Mammary epithelial cell (primary cell): ENCODE measurements at regions of chr19 and their contacts with region 1.

Region 1: GRCh38 chr19:43265664-43266025 is 3.7 kb downstream of the PSG9 start:
- DNase-seq: no peak
- H3K4me3 ChIP-seq: no peak overlapping the region
- H3K27ac ChIP-seq: peak overlapping the region; percentile 96
- H3K4me1 ChIP-seq: peaks cover 31% of the 10 kb centered on the region
- H3K27me3 ChIP-seq: no peaks in the 10 kb centered on the region
- CTCF ChIP-seq: no peak

Region 2: DNA sequence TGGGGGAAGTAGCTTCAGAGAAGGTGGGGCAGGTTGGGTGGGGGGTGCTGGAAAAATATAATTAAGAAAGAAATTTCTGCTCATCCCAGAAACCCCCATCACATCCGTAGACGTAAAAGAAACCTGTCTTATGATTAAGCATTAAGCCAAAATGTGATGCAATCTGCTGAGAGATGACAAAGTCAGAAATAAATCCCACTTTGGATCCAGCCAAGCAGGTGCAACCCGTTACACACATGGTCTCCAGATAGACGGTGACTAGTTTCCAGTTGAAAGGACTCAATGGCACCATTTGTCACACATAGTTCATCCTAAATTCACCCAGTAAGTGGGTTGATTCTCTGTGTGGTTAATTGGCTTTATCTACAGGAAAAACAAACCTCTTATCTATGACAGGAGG is 113.4 kb before region 1 on chr19:
- CTCF ChIA-PET with region 1: no interaction called
- dilution Hi-C with region 1: no loop called
- in situ Hi-C with region 1: no loop called
- intact Hi-C with region 1: no loop called
- DNase-seq: no peak
- H3K4me3 ChIP-seq: no peak overlapping the region
- H3K27ac ChIP-seq: no peak overlapping the region
- H3K4me1 ChIP-seq: peaks cover 26% of the 10 kb centered on the region
- H3K27me3 ChIP-seq: no peaks in the 10 kb centered on the region
- CTCF ChIP-seq: no peak

Region 3: GRCh38 chr19:43207991-43208390 is 57.7 kb before region 1 on chr19:
- CTCF ChIA-PET with region 1: no interaction called
- dilution Hi-C with region 1: no loop called
- in situ Hi-C with region 1: no loop called
- intact Hi-C with region 1: loop called (anchors 5 kb)
- DNase-seq: no peak
- H3K4me3 ChIP-seq: no peak overlapping the region
- H3K27ac ChIP-seq: no peak overlapping the region
- H3K4me1 ChIP-seq: peaks cover 14% of the 10 kb centered on the region
- H3K27me3 ChIP-seq: no peaks in the 10 kb centered on the region
- CTCF ChIP-seq: no peak

Region 4: GRCh38 chr19:43229315-43229714 is 36.3 kb before region 1 on chr19:
- CTCF ChIA-PET with region 1: no interaction called
- dilution Hi-C with region 1: no loop called
- in situ Hi-C with region 1: no loop called
- intact Hi-C with region 1: loop called (anchors 5 kb)
- DNase-seq: peak; percentile 46
- H3K4me3 ChIP-seq: no peak overlapping the region
- H3K27ac ChIP-seq: no peak overlapping the region
- H3K4me1 ChIP-seq: no peaks in the 10 kb centered on the region
- H3K27me3 ChIP-seq: no peaks in the 10 kb centered on the region
- CTCF ChIP-seq: peak; percentile 28 to 52